Activated B cell treated with CpG ODN at 0.5 μM for 24 hours (primary cell): ENCODE measurements at regions of chr9 and their contacts with region 1.

Region 1: DNA sequence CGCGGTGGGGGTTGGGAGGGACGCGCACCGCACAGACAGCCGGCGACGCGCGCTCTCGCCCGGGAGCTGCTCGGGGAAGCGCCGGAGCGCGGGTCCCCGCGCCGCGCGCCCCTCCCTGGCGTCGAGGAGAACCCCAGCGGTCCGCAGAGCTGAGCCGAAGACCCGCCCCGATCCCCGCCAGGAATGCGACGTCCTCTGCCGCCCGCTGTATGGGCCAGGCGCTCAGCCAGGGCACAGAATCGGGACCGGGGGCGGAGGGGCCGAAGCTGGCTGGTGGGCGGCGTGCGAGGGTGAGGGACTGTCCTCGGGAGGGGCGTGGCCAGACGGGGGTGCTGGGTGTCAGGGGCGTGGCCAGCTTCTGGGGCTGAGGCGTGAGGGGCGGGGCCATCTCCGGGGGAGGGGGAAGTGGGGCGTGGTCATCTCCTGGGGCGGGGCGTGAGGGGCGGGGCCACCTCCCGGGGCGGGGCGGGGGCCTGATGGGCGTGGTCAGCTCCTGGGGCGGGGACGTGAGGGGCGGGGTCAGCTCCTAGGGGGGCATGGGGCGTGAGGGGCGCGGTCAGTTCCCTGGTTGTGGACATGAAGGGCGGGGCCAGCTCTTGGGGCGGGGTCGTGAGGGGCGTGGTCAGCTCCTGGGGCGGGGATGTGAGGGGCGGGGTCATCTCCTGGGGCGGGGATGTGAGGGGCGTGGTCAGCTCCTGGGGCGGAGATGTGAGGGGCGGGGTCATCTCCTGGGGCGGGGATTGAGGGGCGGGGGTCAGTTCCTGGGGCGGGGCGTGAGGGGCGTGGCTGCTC is 965 bp downstream of the PTGDS start:
- DNase-seq: no peak
- ATAC-seq: peak; percentile 75
- H3K4me3 Mint-ChIP-seq: no peak overlapping the region
- H3K27ac Mint-ChIP-seq: no peak overlapping the region
- H3K4me1 Mint-ChIP-seq: no peaks in the 10 kb centered on the region
- H3K27me3 Mint-ChIP-seq: peaks cover 29% of the 10 kb centered on the region
- CTCF ChIP-seq: no peak

Region 2: DNA sequence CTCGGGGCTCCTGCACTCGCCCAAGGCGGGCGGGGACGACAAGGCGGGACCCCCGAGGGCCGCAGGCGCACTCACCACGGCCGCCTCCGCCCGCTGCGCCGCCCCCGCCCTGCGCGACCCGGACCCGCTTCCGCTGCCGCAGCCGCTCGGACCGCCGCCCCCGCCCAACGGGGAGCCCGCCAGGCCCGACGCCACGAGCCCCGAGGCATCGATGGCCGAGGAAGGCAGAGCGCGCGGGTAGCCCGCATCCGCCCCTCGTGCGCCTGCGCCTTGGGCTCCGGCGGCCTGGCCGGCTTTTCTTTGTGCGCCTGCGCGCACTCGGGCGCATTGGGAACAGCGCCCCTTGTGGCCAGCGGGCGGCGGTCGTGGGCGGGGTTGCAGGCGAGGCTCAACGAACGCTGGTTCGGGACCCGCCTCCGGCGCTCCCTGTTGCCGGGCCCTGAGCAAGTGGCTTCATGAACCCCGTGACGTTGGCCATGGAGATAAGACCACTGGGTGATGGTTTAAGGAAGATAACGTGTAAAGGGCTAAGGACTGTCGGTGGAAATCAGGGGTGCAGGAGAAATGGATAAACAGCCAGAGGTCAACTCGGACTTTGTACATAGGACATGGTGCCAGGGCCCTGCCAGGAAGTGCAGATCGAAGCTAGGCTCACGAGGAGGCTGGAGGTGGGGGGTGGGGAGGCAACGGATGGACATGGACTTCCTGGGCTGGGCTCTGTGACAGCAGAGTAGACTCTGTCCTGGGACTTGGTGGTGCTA is 33.6 kb before region 1 on chr9 and contains the starts of genes C8G and FBXW5:
- CTCF ChIA-PET with region 1: no interaction called
- POLR2A ChIA-PET with region 1: interaction called, 10 read pairs
- intact Hi-C with region 1: no loop called
- DNase-seq: peak; percentile 97
- ATAC-seq: peak; percentile 90
- H3K4me3 Mint-ChIP-seq: peak within 1 kb of the TSS; percentile 80
- H3K27ac Mint-ChIP-seq: peak within 1 kb of the TSS; percentile 79
- H3K4me1 Mint-ChIP-seq: peaks cover 9% of the 10 kb centered on the region
- H3K27me3 Mint-ChIP-seq: no peaks in the 10 kb centered on the region
- CTCF ChIP-seq: peak; percentile 48
- total RNA-seq, gene C8G: 0.69 and 3.4 TPM in 2 replicates
- total RNA-seq, gene FBXW5: 81.5 and 82.1 TPM in 2 replicates